ENCODE measurements at regions of chr3 and their contacts with region 1.

Region 1: GRCh38 chr3:34015204-34016142 is 217.0 kb downstream of the PDCD6IP start:
- DNase-seq: no peak
- H3K4me3 ChIP-seq: no peak overlapping the region
- H3K27ac ChIP-seq: no peak overlapping the region
- H3K4me1 ChIP-seq: peaks cover 32% of the 10 kb centered on the region
- H3K27me3 ChIP-seq: no peaks in the 10 kb centered on the region
- CTCF ChIP-seq: peak; percentile 1 to 2

Region 2: GRCh38 chr3:33942483-33943150 is 72.9 kb before region 1 on chr3:
- CTCF ChIA-PET with region 1: no interaction called
- dilution Hi-C with region 1: no loop called
- in situ Hi-C with region 1: no loop called
- intact Hi-C with region 1: loop called (anchors 5 kb)
- DNase-seq: peak; percentile 43
- H3K4me3 ChIP-seq: no peak overlapping the region
- H3K27ac ChIP-seq: no peak overlapping the region
- H3K4me1 ChIP-seq: peaks cover 23% of the 10 kb centered on the region
- H3K27me3 ChIP-seq: no peaks in the 10 kb centered on the region
- CTCF ChIP-seq: no peak

Region 3: DNA sequence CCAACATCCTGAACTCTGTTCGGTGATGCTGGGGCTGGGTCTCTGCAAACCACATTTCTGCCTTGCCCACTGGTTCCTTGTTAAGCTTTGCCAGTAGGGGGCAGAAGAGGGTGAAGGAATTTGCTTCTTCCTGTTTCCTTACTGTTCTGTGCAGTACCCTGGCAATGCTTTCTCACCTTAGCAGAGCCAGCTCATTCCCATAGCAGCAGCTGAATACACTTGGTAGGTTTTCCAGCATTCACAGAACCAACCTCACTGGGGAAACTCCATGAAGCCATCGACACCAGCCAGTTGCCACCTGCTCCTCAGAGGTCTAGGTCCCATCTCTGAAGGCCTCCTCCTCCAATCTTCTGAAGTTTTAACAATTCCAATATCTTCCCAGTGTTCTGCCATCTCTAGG is 91.4 kb after region 1 on chr3:
- CTCF ChIA-PET with region 1: interaction called, 15 read pairs
- dilution Hi-C with region 1: no loop called
- in situ Hi-C with region 1: no loop called
- intact Hi-C with region 1: no loop called
- DNase-seq: peak; percentile 2
- H3K4me3 ChIP-seq: no peak overlapping the region
- H3K27ac ChIP-seq: no peak overlapping the region
- H3K4me1 ChIP-seq: no peaks in the 10 kb centered on the region
- H3K27me3 ChIP-seq: no peaks in the 10 kb centered on the region
- CTCF ChIP-seq: peak; percentile 35 to 48

Region 4: GRCh38 chr3:34237946-34238345 is 222.5 kb after region 1 on chr3:
- CTCF ChIA-PET with region 1: no interaction called
- dilution Hi-C with region 1: no loop called
- in situ Hi-C with region 1: no loop called
- intact Hi-C with region 1: no loop called
- DNase-seq: no peak
- H3K4me3 ChIP-seq: no peak overlapping the region
- H3K27ac ChIP-seq: no peak overlapping the region
- H3K4me1 ChIP-seq: no peaks in the 10 kb centered on the region
- H3K27me3 ChIP-seq: peaks cover 2% of the 10 kb centered on the region
- CTCF ChIP-seq: no peak

Region 5: DNA sequence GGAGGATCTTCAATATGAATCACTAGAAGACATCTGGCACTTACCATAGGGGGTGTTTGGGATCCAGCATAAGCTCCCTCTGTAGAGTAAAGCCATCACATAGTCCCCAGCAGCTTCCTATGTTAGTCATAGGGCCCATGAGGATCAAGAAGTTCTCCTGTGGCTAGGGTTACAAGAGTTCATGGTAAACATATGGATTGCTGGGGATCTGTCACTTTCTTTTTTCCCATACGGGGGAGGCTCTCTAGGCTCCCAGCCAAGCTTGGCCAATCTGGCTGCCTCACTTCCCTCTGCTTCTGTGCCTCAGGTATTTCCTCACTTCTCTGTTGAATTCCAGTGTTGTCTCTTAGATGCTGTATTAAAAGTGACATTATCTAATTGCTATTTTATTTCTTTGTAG is 380.8 kb after region 1 on chr3:
- CTCF ChIA-PET with region 1: no interaction called
- dilution Hi-C with region 1: no loop called
- in situ Hi-C with region 1: no loop called
- intact Hi-C with region 1: no loop called
- DNase-seq: no peak
- H3K4me3 ChIP-seq: no peak overlapping the region
- H3K27ac ChIP-seq: no peak overlapping the region
- H3K4me1 ChIP-seq: no peaks in the 10 kb centered on the region
- H3K27me3 ChIP-seq: no peaks in the 10 kb centered on the region
- CTCF ChIP-seq: no peak